MCF 10A (cell line): ENCODE measurements at regions of chr9 and their contacts with region 1.

Region 1: DNA sequence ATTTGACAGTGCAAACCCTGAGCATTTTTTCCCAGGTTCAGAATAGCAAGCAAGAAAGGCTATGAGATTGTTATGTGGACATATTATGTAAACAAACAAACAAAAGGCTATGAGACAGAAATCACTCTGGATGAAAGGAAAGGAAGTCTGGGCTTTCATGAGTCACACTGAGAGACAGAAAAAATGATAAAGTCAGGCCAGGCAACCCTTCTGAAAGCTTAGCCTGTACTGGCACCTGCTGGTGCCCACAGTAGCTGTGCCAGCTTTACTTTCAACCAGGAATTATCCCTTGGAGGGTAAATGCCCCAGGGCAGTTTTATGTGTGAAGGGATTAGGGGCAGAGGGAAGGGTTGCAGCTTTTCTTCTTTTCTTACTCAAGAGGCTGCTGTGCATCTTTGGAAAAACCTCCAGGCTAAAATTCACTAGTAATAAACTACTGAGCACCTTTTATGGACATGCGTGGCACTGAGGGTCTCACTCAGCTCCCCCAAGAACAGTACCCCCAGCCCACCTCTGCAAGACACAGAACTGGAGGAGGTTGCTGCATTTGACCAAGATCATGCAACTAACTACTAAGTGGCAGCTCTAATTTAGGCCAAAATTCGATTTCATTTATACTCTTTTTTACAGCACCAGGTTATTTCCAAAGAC is 41.7 kb downstream of the ACTL7B start:
- DNase-seq: peak; percentile 81
- H3K4me3 Mint-ChIP-seq: no peak overlapping the region
- H3K27ac Mint-ChIP-seq: peak overlapping the region; percentile 56
- H3K4me1 Mint-ChIP-seq: peaks cover 9% of the 10 kb centered on the region
- H3K27me3 Mint-ChIP-seq: no peaks in the 10 kb centered on the region
- CTCF ChIP-seq: peak; percentile 92

Region 2: GRCh38 chr9:107465467-107466451 is 1348.3 kb before region 1 on chr9:
- CTCF ChIA-PET with region 1: no interaction called
- POLR2A ChIA-PET with region 1: no interaction called
- intact Hi-C with region 1: loop called (anchors 2 kb)
- DNase-seq: peak; percentile 61
- H3K4me3 Mint-ChIP-seq: peak overlapping the region; percentile 69
- H3K27ac Mint-ChIP-seq: no peak overlapping the region
- H3K4me1 Mint-ChIP-seq: no peaks in the 10 kb centered on the region
- H3K27me3 Mint-ChIP-seq: no peaks in the 10 kb centered on the region
- CTCF ChIP-seq: peak; percentile 95

Region 3: GRCh38 chr9:108412755-108413154 is 401.3 kb before region 1 on chr9:
- CTCF ChIA-PET with region 1: no interaction called
- POLR2A ChIA-PET with region 1: interaction called, 4 read pairs
- intact Hi-C with region 1: loop called (anchors 2 kb)
- DNase-seq: peak; percentile 19
- H3K4me3 Mint-ChIP-seq: no peak overlapping the region
- H3K27ac Mint-ChIP-seq: no peak overlapping the region
- H3K4me1 Mint-ChIP-seq: peaks cover 11% of the 10 kb centered on the region
- H3K27me3 Mint-ChIP-seq: no peaks in the 10 kb centered on the region
- CTCF ChIP-seq: no peak

Region 4: GRCh38 chr9:108671176-108671575 is 142.9 kb before region 1 on chr9:
- CTCF ChIA-PET with region 1: interaction called, 4 read pairs
- POLR2A ChIA-PET with region 1: no interaction called
- intact Hi-C with region 1: loop called (anchors 1 kb)
- DNase-seq: peak; percentile 64
- H3K4me3 Mint-ChIP-seq: no peak overlapping the region
- H3K27ac Mint-ChIP-seq: peak overlapping the region; percentile 44
- H3K4me1 Mint-ChIP-seq: peaks cover 58% of the 10 kb centered on the region
- H3K27me3 Mint-ChIP-seq: no peaks in the 10 kb centered on the region
- CTCF ChIP-seq: peak; percentile 86

Region 5: DNA sequence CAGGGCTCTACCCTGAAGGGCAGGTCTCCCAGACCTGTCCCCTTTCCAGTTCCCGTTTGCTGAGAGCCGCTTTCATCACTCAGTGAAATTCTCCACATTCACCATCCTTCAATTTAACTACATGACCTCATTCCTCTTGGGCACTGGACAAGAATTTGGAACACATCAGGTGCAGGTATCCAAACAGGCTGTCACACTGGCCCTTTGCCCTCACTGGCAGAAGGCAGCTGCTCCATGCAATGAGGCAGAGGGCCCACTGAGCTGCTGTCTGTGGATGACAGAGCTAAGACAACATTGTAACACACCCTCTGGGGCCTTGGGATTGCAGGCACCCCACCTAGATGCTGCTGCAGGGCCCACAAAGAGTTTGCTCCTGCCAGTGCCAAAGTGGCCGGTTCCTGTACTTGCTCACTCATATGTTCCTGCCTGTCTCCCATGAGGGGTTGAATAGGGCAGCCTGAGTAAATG is 13.4 kb before region 1 on chr9:
- CTCF ChIA-PET with region 1: interaction called, 20 read pairs
- POLR2A ChIA-PET with region 1: no interaction called
- intact Hi-C with region 1: no loop called
- DNase-seq: no peak
- H3K4me3 Mint-ChIP-seq: no peak overlapping the region
- H3K27ac Mint-ChIP-seq: no peak overlapping the region
- H3K4me1 Mint-ChIP-seq: no peaks in the 10 kb centered on the region
- H3K27me3 Mint-ChIP-seq: no peaks in the 10 kb centered on the region
- CTCF ChIP-seq: no peak

Region 6: GRCh38 chr9:108894225-108894997 is 80.3 kb after region 1 on chr9:
- CTCF ChIA-PET with region 1: no interaction called
- POLR2A ChIA-PET with region 1: no interaction called
- intact Hi-C with region 1: no loop called
- DNase-seq: no peak
- H3K4me3 Mint-ChIP-seq: no peak overlapping the region
- H3K27ac Mint-ChIP-seq: no peak overlapping the region
- H3K4me1 Mint-ChIP-seq: no peaks in the 10 kb centered on the region
- H3K27me3 Mint-ChIP-seq: no peaks in the 10 kb centered on the region
- CTCF ChIP-seq: no peak